ENCODE measurements at regions of chr12 and their contacts with region 1.

Region 1: DNA sequence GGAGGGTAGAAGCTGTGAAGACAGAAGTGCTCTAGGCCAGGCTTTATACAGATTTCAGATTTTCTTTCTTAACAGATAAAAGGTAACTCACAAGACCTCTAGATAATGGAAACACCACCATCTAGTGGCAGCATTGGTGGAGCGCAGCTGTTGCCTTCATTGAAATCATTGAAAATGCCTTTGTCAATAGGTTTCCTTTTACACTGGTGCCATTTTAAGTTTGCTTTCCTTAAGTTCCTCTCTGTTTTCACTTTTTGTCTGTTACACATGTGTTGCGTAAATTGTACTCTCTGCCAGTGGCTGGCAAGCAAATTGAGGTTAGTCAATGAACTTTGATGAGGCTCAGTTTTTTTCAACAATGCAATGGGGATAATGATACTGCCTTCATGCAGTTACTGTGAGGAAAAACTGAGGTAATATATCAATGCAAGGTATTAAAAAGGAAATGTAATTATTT is 31.1 kb downstream of the ALDH1L2 start:
- DNase-seq: peak; percentile 46 to 74 (median 48)
- ATAC-seq: peak; percentile 85
- H3K4me3 ChIP-seq: no peak overlapping the region
- H3K27ac ChIP-seq: no peak overlapping the region
- H3K4me1 ChIP-seq: no peaks in the 10 kb centered on the region
- H3K27me3 ChIP-seq: no peaks in the 10 kb centered on the region
- CTCF ChIP-seq: peak; percentile 62 to 90 (median 85)
- EP300 ChIP-seq: no peak
- POLR2A ChIP-seq: no peak
- RAD21 ChIP-seq: peak; percentile 75 to 85

Region 2: GRCh38 chr12:104215638-104216297 is 837.4 kb before region 1 on chr12 and contains the start of gene TXNRD1:
- CTCF ChIA-PET with region 1: no interaction called
- POLR2A ChIA-PET with region 1: no interaction called
- in situ Hi-C with region 1: loop called (anchors 25 kb)
- intact Hi-C with region 1: no loop called
- DNase-seq: peak; percentile 84 to 90 (median 86)
- ATAC-seq: peak; percentile 99
- H3K4me3 ChIP-seq: peak within 1 kb of the TSS; percentile 20
- H3K27ac ChIP-seq: peak within 1 kb of the TSS; percentile 13; the same call in 1 of the 3 replicates
- H3K4me1 ChIP-seq: peaks cover 11% of the 10 kb centered on the region in 2 experiments; a peak in 4 of 5 replicates
- H3K27me3 ChIP-seq: no peaks in the 10 kb centered on the region; a peak in 1 of 5 replicates
- CTCF ChIP-seq: peak; percentile 92 to 94 (median 93)
- EP300 ChIP-seq: no peak
- POLR2A ChIP-seq: 0 out of 2 replicates have a peak, but pooled peaks have one; percentile 51
- RAD21 ChIP-seq: peak; percentile 90 to 94
- polyA plus RNA-seq, gene TXNRD1: 114 to 189 TPM

Region 3: DNA sequence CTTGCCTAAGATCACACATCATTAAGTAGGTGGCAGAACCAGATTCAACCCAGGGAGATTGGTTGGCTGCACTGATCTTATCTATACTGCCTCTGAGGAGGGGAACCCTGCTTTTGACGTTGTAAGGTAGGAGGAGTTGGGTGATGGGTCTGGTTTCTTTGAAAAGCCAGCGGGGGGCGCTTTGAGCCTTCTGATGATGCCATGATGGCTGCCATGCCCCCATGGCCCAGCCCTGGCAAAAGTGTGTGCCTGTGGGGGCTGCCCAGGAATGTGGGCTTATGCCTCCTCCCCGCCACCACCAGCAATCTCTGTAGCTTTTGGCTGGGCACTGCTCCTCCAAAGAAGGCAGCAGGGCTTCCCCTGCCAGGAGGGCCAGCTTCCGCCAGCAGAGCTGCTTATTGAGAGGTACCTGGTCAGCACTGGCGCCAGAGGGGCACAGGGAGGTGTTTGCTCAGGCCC is 319.4 kb before region 1 on chr12:
- CTCF ChIA-PET with region 1: no interaction called
- POLR2A ChIA-PET with region 1: no interaction called
- in situ Hi-C with region 1: no loop called
- intact Hi-C with region 1: loop called (anchors 5 kb)
- DNase-seq: peak; percentile 29 to 46 (median 36)
- ATAC-seq: peak; percentile 59
- H3K4me3 ChIP-seq: no peak overlapping the region
- H3K27ac ChIP-seq: no peak overlapping the region
- H3K4me1 ChIP-seq: peaks cover under 1 to 5% of the 10 kb centered on the region in 2 experiments; a peak in 4 of 5 replicates
- H3K27me3 ChIP-seq: no peaks in the 10 kb centered on the region
- CTCF ChIP-seq: peak in 2 of 3 experiments; percentile 45 to 50; a peak in 2 of 6 replicates
- EP300 ChIP-seq: no peak
- POLR2A ChIP-seq: no peak
- RAD21 ChIP-seq: peak; percentile 35 to 62

Region 4: GRCh38 chr12:104928036-104928745 is 125.0 kb before region 1 on chr12:
- CTCF ChIA-PET with region 1: no interaction called
- POLR2A ChIA-PET with region 1: no interaction called
- in situ Hi-C with region 1: no loop called
- intact Hi-C with region 1: no loop called
- DNase-seq: no peak
- ATAC-seq: no peak
- H3K4me3 ChIP-seq: no peak overlapping the region
- H3K27ac ChIP-seq: no peak overlapping the region
- H3K4me1 ChIP-seq: no peaks in the 10 kb centered on the region
- H3K27me3 ChIP-seq: peaks cover 0 to 9% of the 10 kb centered on the region in 2 experiments; a peak in 4 of 5 replicates
- CTCF ChIP-seq: no peak
- EP300 ChIP-seq: no peak
- POLR2A ChIP-seq: no peak
- RAD21 ChIP-seq: no peak

Region 5: GRCh38 chr12:104958009-104958945 is 94.9 kb before region 1 on chr12 and contains the start of gene SLC41A2:
- CTCF ChIA-PET with region 1: no interaction called
- POLR2A ChIA-PET with region 1: no interaction called
- in situ Hi-C with region 1: no loop called
- intact Hi-C with region 1: no loop called
- DNase-seq: peak; percentile 81 to 90 (median 88)
- ATAC-seq: peak; percentile 93
- H3K4me3 ChIP-seq: peak within 1 kb of the TSS; percentile 48
- H3K27ac ChIP-seq: peak within 1 kb of the TSS; percentile 27; the same call in 2 of the 3 replicates
- H3K4me1 ChIP-seq: peaks cover 18% of the 10 kb centered on the region in 2 experiments; a peak in 4 of 5 replicates
- H3K27me3 ChIP-seq: peaks cover 17 to 27% of the 10 kb centered on the region in 2 experiments
- CTCF ChIP-seq: peak in 1 of 3 experiments; percentile 29; a peak in 1 of 6 replicates
- EP300 ChIP-seq: no peak; the same call in 1 of the 2 replicates
- POLR2A ChIP-seq: no peak
- RAD21 ChIP-seq: no peak
- polyA plus RNA-seq, gene SLC41A2: 0.01 to 0.08 TPM

Region 6: GRCh38 chr12:104986022-104986941 is 66.9 kb before region 1 on chr12 and contains the start of gene NOPCHAP1:
- CTCF ChIA-PET with region 1: interaction called, 3 read pairs
- POLR2A ChIA-PET with region 1: no interaction called
- in situ Hi-C with region 1: no loop called
- intact Hi-C with region 1: loop called (anchors 5 kb)
- DNase-seq: peak; percentile 93 to 95 (median 94)
- ATAC-seq: peak; percentile 100
- H3K4me3 ChIP-seq: peak within 1 kb of the TSS; percentile 86
- H3K27ac ChIP-seq: peak within 1 kb of the TSS; percentile 70
- H3K4me1 ChIP-seq: peaks cover 0 to 10% of the 10 kb centered on the region in 2 experiments; a peak in 2 of 5 replicates
- H3K27me3 ChIP-seq: no peaks in the 10 kb centered on the region
- CTCF ChIP-seq: no peak
- EP300 ChIP-seq: no peak
- POLR2A ChIP-seq: peak; percentile 91
- RAD21 ChIP-seq: no peak
- polyA plus RNA-seq, gene NOPCHAP1: 98.7 to 108 TPM

Region 7: GRCh38 chr12:105138248-105138647 is 85.1 kb after region 1 on chr12:
- CTCF ChIA-PET with region 1: no interaction called
- POLR2A ChIA-PET with region 1: no interaction called
- in situ Hi-C with region 1: no loop called
- intact Hi-C with region 1: no loop called
- DNase-seq: no peak
- ATAC-seq: no peak
- H3K4me3 ChIP-seq: no peak overlapping the region
- H3K27ac ChIP-seq: no peak overlapping the region
- H3K4me1 ChIP-seq: no peaks in the 10 kb centered on the region
- H3K27me3 ChIP-seq: no peaks in the 10 kb centered on the region
- CTCF ChIP-seq: no peak
- EP300 ChIP-seq: no peak
- POLR2A ChIP-seq: no peak
- RAD21 ChIP-seq: no peak

Measured in K562 (cell line).